Common myeloid progenitor, CD34-positive (primary cell): ENCODE measurements at regions of chr12 and their contacts with region 1.

Region 1: GRCh38 chr12:22529281-22530060 is 14.9 kb downstream of the C2CD5 start:
- DNase-seq: peak; percentile 49 to 66 (median 59)
- H3K4me3 ChIP-seq: no peak overlapping the region
- H3K27ac ChIP-seq: no peak overlapping the region
- H3K4me1 ChIP-seq: no peaks in the 10 kb centered on the region
- H3K27me3 ChIP-seq: no peaks in the 10 kb centered on the region

Region 2: GRCh38 chr12:22544038-22544979 is 14.8 kb after region 1 on chr12 and contains the start of gene C2CD5:
- CTCF ChIA-PET with region 1: interaction called, 13 read pairs
- POLR2A ChIA-PET with region 1: interaction called, 3 read pairs
- DNase-seq: peak; percentile 99
- H3K4me3 ChIP-seq: peak within 1 kb of the TSS; percentile 85 to 93 (median 87)
- H3K27ac ChIP-seq: peak within 1 kb of the TSS; percentile 48 to 84
- H3K4me1 ChIP-seq: peaks cover 17 to 34% (median 27%) of the 10 kb centered on the region in 4 experiments
- H3K27me3 ChIP-seq: no peaks in the 10 kb centered on the region

Region 3: DNA sequence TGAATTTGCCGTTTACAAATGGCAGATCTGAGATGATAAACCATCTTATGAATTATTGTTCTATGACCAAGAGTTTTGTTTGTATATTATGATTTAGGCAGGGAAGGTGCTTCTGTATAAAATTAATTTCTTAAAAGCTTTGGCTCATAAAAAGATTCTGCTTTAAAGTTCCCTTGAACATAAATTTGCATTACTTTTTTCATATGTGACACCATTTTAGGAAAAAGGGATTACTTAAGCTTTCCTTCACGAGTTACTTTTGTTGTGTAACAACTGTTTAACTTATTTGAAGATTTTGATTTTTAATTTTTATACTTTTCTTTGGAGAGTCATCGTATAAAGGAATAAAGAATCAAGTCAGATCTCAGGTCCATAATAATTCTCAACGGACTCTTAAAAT is 98.8 kb after region 1 on chr12:
- CTCF ChIA-PET with region 1: interaction called, 45 read pairs
- POLR2A ChIA-PET with region 1: no interaction called
- DNase-seq: no peak
- H3K4me3 ChIP-seq: peak overlapping the region in 3 of 7 experiments; percentile 85 to 87 (median 86)
- H3K27ac ChIP-seq: peak overlapping the region in 1 of 2 experiments; percentile 93
- H3K4me1 ChIP-seq: peaks cover 12 to 43% (median 34%) of the 10 kb centered on the region in 4 experiments
- H3K27me3 ChIP-seq: no peaks in the 10 kb centered on the region

Region 4: GRCh38 chr12:22670762-22671161 is 141.3 kb after region 1 on chr12:
- CTCF ChIA-PET with region 1: interaction called, 21 read pairs
- POLR2A ChIA-PET with region 1: no interaction called
- DNase-seq: peak in 2 of 3 donors; percentile 25 to 42
- H3K4me3 ChIP-seq: no peak overlapping the region
- H3K27ac ChIP-seq: no peak overlapping the region
- H3K4me1 ChIP-seq: no peaks in the 10 kb centered on the region
- H3K27me3 ChIP-seq: no peaks in the 10 kb centered on the region

Region 5: DNA sequence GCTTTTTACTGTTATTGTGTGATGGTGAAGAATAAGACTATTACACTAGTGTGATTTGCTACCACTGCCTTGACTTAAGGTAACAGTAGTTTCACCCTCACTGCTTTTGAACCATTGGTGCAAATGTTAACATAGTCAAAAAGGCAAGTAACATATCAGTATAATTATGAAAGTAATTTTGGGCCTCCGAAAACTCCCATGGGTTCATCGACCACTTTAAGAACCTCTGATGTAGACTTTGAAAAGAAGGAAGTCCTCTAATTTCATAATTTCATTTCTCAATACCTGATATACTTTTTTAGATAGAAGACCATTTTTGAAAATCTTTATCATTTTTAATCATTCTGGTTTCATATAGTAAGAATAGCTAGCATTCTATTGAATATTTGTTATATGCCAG is 153.2 kb after region 1 on chr12:
- CTCF ChIA-PET with region 1: no interaction called
- POLR2A ChIA-PET with region 1: no interaction called
- DNase-seq: no peak
- H3K4me3 ChIP-seq: no peak overlapping the region
- H3K27ac ChIP-seq: peak overlapping the region in 1 of 2 experiments; percentile 26
- H3K4me1 ChIP-seq: peaks cover 0 to 16% (median 1%) of the 10 kb centered on the region in 4 experiments
- H3K27me3 ChIP-seq: no peaks in the 10 kb centered on the region

Region 6: DNA sequence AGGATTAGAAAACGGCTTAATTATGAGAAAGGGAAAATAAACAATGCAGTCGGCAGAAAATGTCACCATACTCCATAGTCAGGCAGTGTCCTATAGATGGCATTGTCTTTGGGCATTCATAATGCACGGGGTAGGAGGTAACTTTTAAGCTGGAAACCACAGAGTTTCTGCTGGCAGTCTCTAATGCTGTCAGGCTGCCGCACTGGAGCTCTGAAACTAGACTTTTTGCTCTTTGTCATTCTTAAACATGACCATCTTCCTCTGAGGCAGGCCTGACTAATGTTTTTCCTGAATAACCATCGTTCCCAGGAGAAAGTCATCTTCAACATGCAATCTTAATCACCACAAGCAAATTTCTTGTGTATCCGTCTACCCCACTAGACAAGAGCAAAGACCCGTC is 204.3 kb after region 1 on chr12:
- CTCF ChIA-PET with region 1: no interaction called
- POLR2A ChIA-PET with region 1: no interaction called
- DNase-seq: no peak
- H3K4me3 ChIP-seq: no peak overlapping the region
- H3K27ac ChIP-seq: no peak overlapping the region
- H3K4me1 ChIP-seq: peaks cover 0 to 11% (median 3%) of the 10 kb centered on the region in 4 experiments
- H3K27me3 ChIP-seq: no peaks in the 10 kb centered on the region